Calu3 (cell line): ENCODE measurements at regions of chr19 and their contacts with region 1.

Region 1: DNA sequence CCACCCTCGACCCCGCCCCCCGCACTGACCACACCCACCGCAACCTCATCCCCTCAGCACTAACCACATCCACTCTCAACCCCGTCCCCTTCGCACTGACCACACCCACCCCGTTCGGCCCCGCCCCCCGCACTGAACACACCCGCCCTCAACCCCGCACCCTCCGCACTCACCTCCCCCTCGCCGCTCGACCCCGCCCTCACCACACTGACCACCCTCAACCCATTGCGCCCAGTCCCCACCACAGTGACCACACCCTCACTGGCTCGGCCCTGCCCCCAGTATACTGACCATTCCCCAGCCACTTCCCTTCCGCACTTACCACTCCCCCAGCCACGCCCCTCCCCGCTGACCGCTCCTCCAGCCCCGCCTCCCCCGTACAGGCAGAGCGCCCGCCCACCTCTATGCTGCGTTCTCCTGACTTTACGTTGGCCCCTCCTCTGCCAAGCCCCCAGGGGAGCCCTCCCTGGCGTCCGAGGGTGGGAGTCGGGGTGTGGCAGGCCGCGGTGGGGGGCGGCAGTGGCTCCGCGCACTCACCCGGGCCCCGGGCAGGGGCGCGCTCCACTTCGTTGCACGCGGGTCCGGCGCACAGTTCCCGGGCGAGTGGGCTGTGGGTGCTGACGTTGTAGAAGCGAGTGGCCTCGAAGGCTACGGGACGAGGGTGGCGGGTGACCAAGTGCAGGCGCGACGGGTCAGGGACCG is 8.5 kb downstream of the F2RL3 start:
- DNase-seq: peak; percentile 92
- H3K4me3 Mint-ChIP-seq: peak overlapping the region; percentile 50
- H3K27ac Mint-ChIP-seq: no peak overlapping the region
- H3K4me1 Mint-ChIP-seq: no peaks in the 10 kb centered on the region
- H3K27me3 Mint-ChIP-seq: peaks cover 11% of the 10 kb centered on the region
- CTCF ChIP-seq: no peak

Region 2: GRCh38 chr19:16714702-16715287 is 182.5 kb before region 1 on chr19:
- CTCF ChIA-PET with region 1: no interaction called
- intact Hi-C with region 1: loop called (anchors 10 kb)
- DNase-seq: peak; percentile 59
- H3K4me3 Mint-ChIP-seq: no peak overlapping the region
- H3K27ac Mint-ChIP-seq: no peak overlapping the region
- H3K4me1 Mint-ChIP-seq: no peaks in the 10 kb centered on the region
- H3K27me3 Mint-ChIP-seq: no peaks in the 10 kb centered on the region
- CTCF ChIP-seq: peak; percentile 75

Region 3: DNA sequence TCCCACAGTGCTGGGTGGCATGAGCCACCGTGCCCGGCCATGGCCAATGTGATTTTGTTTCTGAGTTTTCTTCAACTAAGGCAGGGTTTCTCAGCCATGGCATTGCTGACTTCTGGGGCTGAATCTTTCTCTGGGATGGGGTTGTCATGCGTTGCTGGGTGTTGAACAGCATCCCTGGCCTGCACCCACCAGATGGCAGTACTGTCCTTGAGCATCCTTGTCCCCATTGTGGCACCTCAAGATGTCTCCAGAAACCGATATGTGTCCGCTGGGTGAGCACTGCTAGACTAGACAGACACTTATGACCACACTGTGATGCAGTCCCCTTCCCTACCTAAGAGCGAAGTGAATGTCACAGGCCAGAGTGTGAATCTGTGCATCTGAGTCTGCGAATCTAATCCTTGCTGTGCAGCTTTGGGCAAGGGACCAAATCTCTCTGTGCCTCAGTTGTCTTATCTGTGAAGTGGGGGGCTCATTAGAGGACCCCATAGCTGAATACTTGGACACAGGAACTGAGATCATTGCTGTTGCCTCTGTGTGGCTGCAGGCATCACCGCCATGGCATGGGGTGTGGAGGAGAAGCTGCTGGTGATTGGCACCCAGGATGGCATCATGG is 118.4 kb before region 1 on chr19:
- CTCF ChIA-PET with region 1: no interaction called
- intact Hi-C with region 1: loop called (anchors 2 kb)
- DNase-seq: peak; percentile 62
- H3K4me3 Mint-ChIP-seq: no peak overlapping the region
- H3K27ac Mint-ChIP-seq: no peak overlapping the region
- H3K4me1 Mint-ChIP-seq: no peaks in the 10 kb centered on the region
- H3K27me3 Mint-ChIP-seq: peaks cover 15% of the 10 kb centered on the region
- CTCF ChIP-seq: peak; percentile 27